Left ventricle myocardium inferior (tissue), 1 donor: ENCODE measurements at regions of chr12 and their contacts with region 1.

Region 1: DNA sequence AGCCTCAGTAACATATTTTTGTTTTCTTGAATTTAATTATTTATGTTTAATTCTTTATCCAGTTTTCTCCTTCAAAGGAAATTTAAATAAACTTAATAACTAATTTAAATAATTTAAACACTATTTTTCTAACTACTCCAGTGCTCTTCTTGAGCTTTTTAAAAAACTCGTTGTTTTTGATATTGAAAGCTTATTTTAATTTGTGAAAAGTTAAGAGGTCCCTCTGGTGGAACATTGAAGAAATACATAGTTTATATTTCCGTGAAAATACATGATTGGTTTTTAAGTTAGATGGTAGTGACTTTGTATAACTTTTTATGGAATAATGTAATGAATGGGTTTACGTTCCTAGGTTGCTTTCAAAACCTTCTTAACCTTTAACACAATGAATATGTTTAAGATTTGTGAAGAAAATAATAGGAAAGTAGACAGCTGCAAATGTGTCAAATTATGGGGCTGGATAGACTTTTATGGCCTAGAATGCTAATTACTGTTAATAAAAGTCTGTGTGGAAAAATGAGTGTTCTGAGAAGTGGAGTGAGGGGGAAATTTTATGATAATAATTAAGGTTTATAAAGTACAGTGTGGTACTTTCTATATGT is 45.9 kb upstream of the MSRB3 start:
- DNase-seq: no peak
- H3K4me3 ChIP-seq: no peak overlapping the region
- H3K27ac ChIP-seq: no peak overlapping the region
- H3K4me1 ChIP-seq: peaks cover 5% of the 10 kb centered on the region
- H3K27me3 ChIP-seq: no peaks in the 10 kb centered on the region
- CTCF ChIP-seq: peak; percentile 61

Region 2: DNA sequence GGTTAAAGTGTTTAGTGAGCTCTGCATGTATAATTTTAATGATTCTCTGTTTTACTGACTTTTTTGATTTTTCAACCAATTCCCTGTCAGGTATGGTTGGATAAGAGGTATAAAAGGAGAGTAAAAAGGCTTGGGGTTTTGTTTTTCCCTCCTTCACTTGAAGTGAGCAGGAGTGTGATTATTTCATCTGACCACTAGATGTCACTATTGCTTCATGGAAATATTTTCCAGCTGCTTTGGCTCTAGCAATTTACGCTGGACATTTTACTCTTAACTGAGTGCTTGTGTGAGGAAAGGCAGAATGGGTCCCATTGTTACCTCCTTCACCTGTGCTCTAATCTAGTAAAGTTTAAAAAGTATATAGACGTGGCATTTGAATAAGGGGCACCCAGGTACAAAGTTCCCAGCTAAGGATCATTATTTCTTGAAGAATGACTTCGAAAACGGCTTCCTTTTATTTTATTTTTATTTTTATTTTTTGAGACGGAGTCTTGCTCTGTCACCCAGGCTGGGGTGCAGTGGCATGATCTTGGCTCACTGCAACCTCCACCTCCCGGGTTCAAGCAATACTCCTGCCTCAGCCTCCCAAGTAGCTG is 341.6 kb before region 1 on chr12:
- intact Hi-C with region 1: loop called (anchors 10 kb)
- DNase-seq: no peak
- H3K4me3 ChIP-seq: no peak overlapping the region
- H3K27ac ChIP-seq: no peak overlapping the region
- H3K4me1 ChIP-seq: no peaks in the 10 kb centered on the region
- H3K27me3 ChIP-seq: peaks cover 47% of the 10 kb centered on the region
- CTCF ChIP-seq: peak; percentile 91

Region 3: DNA sequence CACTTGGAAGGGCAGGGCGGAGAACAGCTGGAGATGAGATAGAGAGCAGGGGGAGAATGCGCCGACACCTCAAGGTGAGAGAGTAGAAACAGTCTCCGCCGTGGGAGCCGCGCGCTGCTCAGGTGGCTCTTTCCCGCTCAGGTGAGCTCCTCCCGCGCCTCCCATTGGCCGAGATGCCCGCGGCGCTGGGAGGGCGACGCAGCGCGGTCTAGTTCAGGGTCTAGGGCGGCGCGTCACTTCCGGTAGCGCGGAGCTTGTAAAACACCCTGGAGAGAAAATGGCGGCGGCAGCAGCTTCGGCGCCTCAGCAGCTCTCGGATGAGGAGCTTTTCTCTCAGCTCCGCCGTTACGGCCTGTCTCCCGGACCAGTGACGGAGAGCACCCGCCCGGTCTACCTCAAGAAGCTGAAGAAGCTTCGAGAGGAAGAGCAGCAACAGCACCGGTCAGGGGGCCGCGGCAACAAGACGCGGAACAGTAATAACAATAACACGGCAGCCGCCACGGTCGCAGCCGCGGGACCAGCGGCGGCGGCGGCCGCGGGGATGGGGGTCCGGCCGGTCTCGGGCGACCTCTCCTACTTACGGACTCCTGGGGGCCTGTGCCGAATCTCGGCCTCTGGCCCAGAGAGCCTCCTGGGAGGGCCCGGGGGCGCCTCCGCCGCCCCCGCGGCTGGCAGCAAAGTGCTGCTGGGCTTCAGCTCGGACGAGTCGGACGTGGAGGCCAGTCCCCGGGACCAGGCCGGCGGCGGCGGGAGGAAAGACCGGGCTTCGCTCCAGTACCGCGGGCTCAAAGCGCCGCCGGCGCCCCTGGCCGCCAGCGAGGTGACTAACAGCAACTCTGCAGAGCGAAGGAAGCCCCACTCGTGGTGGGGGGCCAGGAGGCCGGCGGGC is 63.0 kb before region 1 on chr12 and contains the start of gene LEMD3:
- intact Hi-C with region 1: loop called (anchors 10 kb)
- DNase-seq: peak; percentile 94
- H3K4me3 ChIP-seq: peak within 1 kb of the TSS; percentile 94
- H3K27ac ChIP-seq: peak within 1 kb of the TSS; percentile 96
- H3K4me1 ChIP-seq: peaks cover 57% of the 10 kb centered on the region
- H3K27me3 ChIP-seq: no peaks in the 10 kb centered on the region
- CTCF ChIP-seq: no peak
- total RNA-seq, gene LEMD3: 13.5 TPM

Region 4: GRCh38 chr12:65656904-65657351 is 424.4 kb after region 1 on chr12:
- intact Hi-C with region 1: no loop called
- DNase-seq: no peak
- H3K4me3 ChIP-seq: no peak overlapping the region
- H3K27ac ChIP-seq: no peak overlapping the region
- H3K4me1 ChIP-seq: no peaks in the 10 kb centered on the region
- H3K27me3 ChIP-seq: peaks cover 8% of the 10 kb centered on the region
- CTCF ChIP-seq: no peak